T-cell (primary cell): ENCODE measurements at regions of chr12 and their contacts with region 1.

Region 1: GRCh38 chr12:12070674-12071656 is at the start of gene BCL2L14:
- DNase-seq: peak in 2 of 35 experiments; percentile 5 to 37
- ATAC-seq: peak; percentile 47 to 66 (median 56)
- H3K4me3 ChIP-seq: peak within 1 kb of the TSS in 1 of 2 donors; percentile 16
- H3K4me3 Mint-ChIP-seq: peak within 1 kb of the TSS; percentile 69 to 78 (median 72)
- H3K27ac ChIP-seq: no peak within 1 kb of the TSS
- H3K27ac Mint-ChIP-seq: peak within 1 kb of the TSS; percentile 82 to 85
- H3K4me1 ChIP-seq: peaks cover 0 to 18% of the 10 kb centered on the region in 2 experiments
- H3K4me1 Mint-ChIP-seq: peaks cover 23 to 28% (median 24%) of the 10 kb centered on the region in 3 donors
- H3K27me3 ChIP-seq: peaks cover 0 to 4% of the 10 kb centered on the region in 2 experiments
- H3K27me3 Mint-ChIP-seq: peaks cover 2 to 3% of the 10 kb centered on the region in 2 donors
- total RNA-seq, gene BCL2L14: 0.47 to 1.1 (median 0.77) TPM in 4 of 5 donors, not detected in the other

Region 2: GRCh38 chr12:11986165-11986564 is 84.8 kb before region 1 on chr12:
- CTCF ChIA-PET with region 1: no interaction called
- POLR2A ChIA-PET with region 1: no interaction called
- DNase-seq: no peak
- ATAC-seq: no peak
- H3K4me3 ChIP-seq: no peak overlapping the region
- H3K4me3 Mint-ChIP-seq: no peak overlapping the region
- H3K27ac ChIP-seq: no peak overlapping the region
- H3K27ac Mint-ChIP-seq: no peak overlapping the region
- H3K4me1 ChIP-seq: peaks cover 6 to 12% of the 10 kb centered on the region in 2 experiments
- H3K4me1 Mint-ChIP-seq: peaks cover 22 to 37% (median 23%) of the 10 kb centered on the region in 3 donors
- H3K27me3 ChIP-seq: no peaks in the 10 kb centered on the region
- H3K27me3 Mint-ChIP-seq: no peaks in the 10 kb centered on the region

Region 3: GRCh38 chr12:12046401-12046800 is 24.6 kb before region 1 on chr12:
- CTCF ChIA-PET with region 1: no interaction called
- POLR2A ChIA-PET with region 1: no interaction called
- DNase-seq: no peak
- ATAC-seq: no peak
- H3K4me3 ChIP-seq: no peak overlapping the region
- H3K4me3 Mint-ChIP-seq: no peak overlapping the region
- H3K27ac ChIP-seq: no peak overlapping the region
- H3K27ac Mint-ChIP-seq: no peak overlapping the region
- H3K4me1 ChIP-seq: no peaks in the 10 kb centered on the region
- H3K4me1 Mint-ChIP-seq: no peaks in the 10 kb centered on the region
- H3K27me3 ChIP-seq: peaks cover 0 to 8% of the 10 kb centered on the region in 2 experiments
- H3K27me3 Mint-ChIP-seq: peaks cover 0 to 3% of the 10 kb centered on the region in 2 donors

Region 4: GRCh38 chr12:12182703-12183365 is 111.9 kb after region 1 on chr12:
- CTCF ChIA-PET with region 1: no interaction called
- POLR2A ChIA-PET with region 1: no interaction called
- DNase-seq: no peak
- ATAC-seq: no peak
- H3K4me3 ChIP-seq: no peak overlapping the region
- H3K4me3 Mint-ChIP-seq: no peak overlapping the region
- H3K27ac ChIP-seq: no peak overlapping the region
- H3K27ac Mint-ChIP-seq: no peak overlapping the region
- H3K4me1 ChIP-seq: no peaks in the 10 kb centered on the region
- H3K4me1 Mint-ChIP-seq: no peaks in the 10 kb centered on the region
- H3K27me3 ChIP-seq: no peaks in the 10 kb centered on the region
- H3K27me3 Mint-ChIP-seq: peaks cover 0 to 6% of the 10 kb centered on the region in 2 donors

Region 5: DNA sequence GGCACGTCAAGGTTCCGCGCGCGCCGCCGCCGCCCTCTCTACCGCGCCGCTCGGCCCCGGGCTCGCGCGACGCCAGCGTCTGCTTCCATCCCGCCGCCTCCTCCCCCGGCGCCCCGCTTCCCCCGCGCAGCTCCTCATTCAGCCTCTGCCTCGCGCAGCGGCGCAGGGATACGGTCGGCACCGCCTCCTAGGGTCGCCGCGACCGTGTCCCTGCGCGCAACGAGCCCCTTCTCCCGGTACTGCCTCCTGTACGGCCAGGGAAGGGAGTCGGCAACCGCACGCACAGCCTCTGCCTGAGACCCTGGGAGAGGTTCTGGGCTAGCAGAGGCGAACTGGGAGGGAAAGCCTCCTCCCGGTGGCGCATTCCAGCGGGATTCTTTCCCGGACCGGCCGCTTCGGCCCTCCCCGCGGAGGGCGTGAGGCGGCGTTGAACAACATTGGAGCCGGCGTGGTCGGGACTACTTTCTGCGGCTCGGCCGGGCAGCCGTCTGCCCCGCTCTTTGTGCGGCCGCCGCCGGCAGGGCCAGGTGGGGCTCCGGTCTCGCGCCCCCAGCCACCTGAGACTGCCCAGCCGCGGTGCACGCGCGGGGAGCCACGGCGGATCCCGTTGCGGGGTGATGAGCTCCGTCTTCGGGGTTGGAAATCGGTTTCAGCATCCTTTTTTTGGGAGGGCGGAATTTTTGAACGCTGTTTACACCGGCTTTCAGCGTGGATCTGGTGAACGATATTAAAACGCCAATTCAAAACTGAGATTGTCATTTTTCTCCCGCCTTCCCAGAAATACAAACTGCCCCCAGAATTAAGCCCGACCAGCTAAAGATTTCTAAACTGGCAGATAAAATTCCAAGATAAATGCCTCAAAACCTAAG is 196.1 kb after region 1 on chr12 and contains the start of gene LRP6:
- CTCF ChIA-PET with region 1: interaction called in 1 of 2 experiments, 10 read pairs
- POLR2A ChIA-PET with region 1: no interaction called
- DNase-seq: peak; percentile 37 to 80 (median 62)
- ATAC-seq: peak; percentile 92 to 94 (median 94)
- H3K4me3 ChIP-seq: peak within 1 kb of the TSS; percentile 62 to 84
- H3K4me3 Mint-ChIP-seq: peak within 1 kb of the TSS; percentile 79 to 90 (median 84)
- H3K27ac ChIP-seq: no peak within 1 kb of the TSS
- H3K27ac Mint-ChIP-seq: peak within 1 kb of the TSS in 1 of 2 donors; percentile 28
- H3K4me1 ChIP-seq: peaks cover 2 to 16% of the 10 kb centered on the region in 2 experiments
- H3K4me1 Mint-ChIP-seq: peaks cover 22 to 35% (median 24%) of the 10 kb centered on the region in 3 donors
- H3K27me3 ChIP-seq: peaks cover 0 to 36% of the 10 kb centered on the region in 2 experiments
- H3K27me3 Mint-ChIP-seq: peaks cover 0 to 30% of the 10 kb centered on the region in 2 donors
- total RNA-seq, gene LRP6: 4.9 to 8.7 (median 6.3) TPM